ENCODE measurements at regions of chr15 and their contacts with region 1.

Region 1: GRCh38 chr15:78944669-78945407 is at the start of gene CTSH:
- DNase-seq: peak; percentile 74
- ATAC-seq: peak; percentile 78
- H3K4me3 ChIP-seq: peak within 1 kb of the TSS; percentile 65
- H3K27ac ChIP-seq: no peak within 1 kb of the TSS
- H3K4me1 ChIP-seq: peaks cover 23% of the 10 kb centered on the region
- H3K27me3 ChIP-seq: no peaks in the 10 kb centered on the region
- CTCF ChIP-seq: no peak
- total RNA-seq, gene CTSH: 136 and 146 TPM in 2 replicates

Region 2: DNA sequence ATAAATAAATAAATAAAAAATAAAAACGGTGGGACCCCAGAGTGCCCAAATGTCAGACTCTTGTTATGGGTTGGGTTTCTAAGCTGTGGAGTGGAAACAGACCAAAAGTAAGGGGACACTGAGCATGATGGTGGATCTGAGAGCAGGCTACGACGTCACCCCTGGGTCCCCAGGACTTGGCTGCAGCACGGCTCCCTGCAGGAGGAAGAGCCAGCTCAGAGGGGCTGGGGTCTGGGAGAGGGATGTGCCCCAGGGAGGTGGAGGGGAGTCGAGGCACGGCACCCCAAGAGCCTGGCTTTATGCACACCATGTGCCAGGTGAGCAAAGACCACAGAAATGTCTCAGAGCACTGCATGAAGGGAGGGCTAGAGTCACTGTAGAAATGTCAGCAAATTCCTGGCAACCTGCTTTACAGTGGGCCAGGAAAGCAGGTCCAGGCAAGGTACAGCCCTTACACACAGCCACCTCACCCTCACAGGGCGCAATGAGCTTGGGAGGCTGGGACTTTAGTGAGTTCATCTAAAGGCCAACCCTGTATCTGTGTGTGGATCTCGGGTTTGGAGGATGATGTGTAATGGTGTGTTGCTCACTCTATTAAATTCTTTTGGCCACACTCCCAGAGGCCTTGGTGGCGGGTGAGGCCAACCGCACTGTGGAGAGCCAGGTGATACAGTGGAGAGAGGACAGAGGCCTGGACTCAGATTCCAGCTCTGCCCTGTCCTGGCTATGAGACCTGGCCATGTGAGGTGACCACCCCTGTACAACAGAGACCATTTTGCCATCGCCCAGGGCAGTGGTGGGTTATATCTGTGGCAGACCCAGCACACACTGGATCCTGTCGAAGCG is 14.1 kb before region 1 on chr15:
- CTCF ChIA-PET with region 1: interaction called, 8 read pairs
- POLR2A ChIA-PET with region 1: no interaction called
- intact Hi-C with region 1: loop called (anchors 2 kb)
- DNase-seq: peak; percentile 98
- ATAC-seq: peak; percentile 94
- H3K4me3 ChIP-seq: no peak overlapping the region
- H3K27ac ChIP-seq: peak overlapping the region; percentile 98
- H3K4me1 ChIP-seq: peaks cover 23% of the 10 kb centered on the region
- H3K27me3 ChIP-seq: no peaks in the 10 kb centered on the region
- CTCF ChIP-seq: no peak

Region 3: GRCh38 chr15:79140839-79141570 is 196.2 kb after region 1 on chr15:
- CTCF ChIA-PET with region 1: no interaction called
- POLR2A ChIA-PET with region 1: no interaction called
- intact Hi-C with region 1: no loop called
- DNase-seq: no peak
- ATAC-seq: no peak
- H3K4me3 ChIP-seq: no peak overlapping the region
- H3K27ac ChIP-seq: no peak overlapping the region
- H3K4me1 ChIP-seq: no peaks in the 10 kb centered on the region
- H3K27me3 ChIP-seq: peaks cover 24% of the 10 kb centered on the region
- CTCF ChIP-seq: no peak